ENCODE measurements at regions of chr16 and their contacts with region 1.

Region 1: GRCh38 chr16:4261557-4262172 is 11.2 kb downstream of the TFAP4 start:
- DNase-seq: peak in 1 of 2 experiments; percentile 95
- H3K4me3 ChIP-seq: no peak overlapping the region
- H3K27ac ChIP-seq: no peak overlapping the region
- H3K4me1 ChIP-seq: peaks cover 0 to 11% (median 8%) of the 10 kb centered on the region in 4 experiments; a peak in 5 of 7 replicates
- H3K27me3 ChIP-seq: no peaks in the 10 kb centered on the region
- CTCF ChIP-seq: peak; percentile 86 to 98 (median 97)
- EP300 ChIP-seq: no peak
- POLR2A ChIP-seq: no peak
- RAD21 ChIP-seq: peak; percentile 80 to 83

Region 2: DNA sequence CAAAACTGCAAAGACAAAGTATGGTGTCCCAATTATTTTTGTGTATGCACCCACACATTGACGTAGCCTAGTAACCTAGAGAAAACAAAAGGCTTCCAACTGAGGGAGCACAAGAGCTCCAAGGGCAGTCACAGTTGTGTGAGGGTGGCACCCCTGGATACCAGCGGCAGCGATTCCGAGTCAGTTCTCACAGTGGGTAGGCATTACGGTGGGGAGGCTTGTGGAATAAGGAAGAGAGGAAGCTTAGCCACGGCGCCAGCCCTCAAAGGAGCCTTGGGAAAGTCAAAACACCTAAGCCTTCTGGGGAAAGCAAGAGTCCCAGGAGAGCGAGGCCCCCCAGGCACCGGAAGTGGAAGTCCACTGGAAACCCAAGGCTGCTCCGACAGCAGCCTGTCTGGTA is 114.4 kb before region 1 on chr16:
- CTCF ChIA-PET with region 1: no interaction called
- POLR2A ChIA-PET with region 1: no interaction called
- DNase-seq: no peak
- H3K4me3 ChIP-seq: no peak overlapping the region
- H3K27ac ChIP-seq: no peak overlapping the region
- H3K4me1 ChIP-seq: no peaks in the 10 kb centered on the region; a peak in 1 of 7 replicates
- H3K27me3 ChIP-seq: no peaks in the 10 kb centered on the region
- CTCF ChIP-seq: no peak
- EP300 ChIP-seq: no peak
- POLR2A ChIP-seq: no peak
- RAD21 ChIP-seq: no peak

Region 3: GRCh38 chr16:4214215-4214621 is 47.4 kb before region 1 on chr16:
- CTCF ChIA-PET with region 1: no interaction called
- POLR2A ChIA-PET with region 1: no interaction called
- DNase-seq: peak in 1 of 2 experiments; percentile 17
- H3K4me3 ChIP-seq: no peak overlapping the region
- H3K27ac ChIP-seq: no peak overlapping the region
- H3K4me1 ChIP-seq: peaks cover 6 to 17% (median 8%) of the 10 kb centered on the region in 4 experiments
- H3K27me3 ChIP-seq: no peaks in the 10 kb centered on the region
- CTCF ChIP-seq: no peak
- EP300 ChIP-seq: no peak
- POLR2A ChIP-seq: no peak
- RAD21 ChIP-seq: no peak

Region 4: GRCh38 chr16:4293822-4294457 is 32.3 kb after region 1 on chr16:
- CTCF ChIA-PET with region 1: interaction called, 29 read pairs
- POLR2A ChIA-PET with region 1: interaction called, 403 read pairs
- DNase-seq: peak in 1 of 2 experiments; percentile 82
- H3K4me3 ChIP-seq: peak overlapping the region in 3 of 4 experiments; percentile 24 to 50 (median 34); a peak in 6 of 8 replicates
- H3K27ac ChIP-seq: peak overlapping the region; percentile 67
- H3K4me1 ChIP-seq: peaks cover 7 to 23% (median 15%) of the 10 kb centered on the region in 4 experiments
- H3K27me3 ChIP-seq: no peaks in the 10 kb centered on the region
- CTCF ChIP-seq: peak in 1 of 3 experiments; percentile 1; a peak in 1 of 4 replicates
- EP300 ChIP-seq: peak in 1 of 2 experiments; percentile 65; a peak in 1 of 3 replicates
- POLR2A ChIP-seq: peak in 1 of 2 experiments; percentile 26; a peak in 1 of 3 replicates
- RAD21 ChIP-seq: peak in 1 of 2 experiments; percentile 25; a peak in 1 of 4 replicates

Region 5: DNA sequence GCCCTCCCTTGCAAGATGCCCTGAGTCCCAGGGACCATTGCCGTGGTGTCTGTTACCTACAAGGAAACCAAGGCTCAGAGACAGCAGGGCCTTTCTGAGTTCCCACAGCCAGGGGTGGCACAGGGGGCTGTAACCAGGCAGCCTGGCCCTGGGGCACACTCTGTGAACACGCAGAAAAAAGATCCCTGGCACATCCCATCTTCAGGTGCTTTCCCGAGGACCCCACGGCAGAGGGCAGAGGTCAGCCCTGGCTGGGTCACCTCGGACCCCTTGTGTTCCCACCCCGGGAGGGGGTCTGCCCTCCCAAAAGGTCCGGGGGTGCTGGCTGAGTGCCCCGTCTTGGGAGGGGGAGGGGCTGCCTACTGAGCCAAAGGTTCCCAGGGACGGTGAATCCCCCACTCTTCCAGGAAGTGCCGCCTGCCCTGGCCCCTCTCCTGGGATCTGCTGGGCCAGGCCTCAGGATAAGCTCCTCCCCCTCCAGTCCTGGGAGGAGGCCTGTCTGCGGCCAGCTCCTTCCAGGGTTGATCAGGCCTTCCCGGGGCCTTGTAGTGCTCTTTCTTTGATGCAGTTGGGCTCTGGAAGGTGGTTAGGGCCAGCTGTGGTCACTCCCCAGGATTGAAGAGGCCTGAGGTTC is 62.3 kb after region 1 on chr16:
- CTCF ChIA-PET with region 1: interaction called, 132 read pairs
- POLR2A ChIA-PET with region 1: interaction called, 11 read pairs
- DNase-seq: peak in 1 of 2 experiments; percentile 77
- H3K4me3 ChIP-seq: peak overlapping the region in 1 of 4 experiments; percentile 11; a peak in 1 of 8 replicates
- H3K27ac ChIP-seq: no peak overlapping the region
- H3K4me1 ChIP-seq: peaks cover 5 to 38% (median 31%) of the 10 kb centered on the region in 4 experiments
- H3K27me3 ChIP-seq: no peaks in the 10 kb centered on the region
- CTCF ChIP-seq: no peak
- EP300 ChIP-seq: no peak
- POLR2A ChIP-seq: no peak
- RAD21 ChIP-seq: no peak

Region 6: DNA sequence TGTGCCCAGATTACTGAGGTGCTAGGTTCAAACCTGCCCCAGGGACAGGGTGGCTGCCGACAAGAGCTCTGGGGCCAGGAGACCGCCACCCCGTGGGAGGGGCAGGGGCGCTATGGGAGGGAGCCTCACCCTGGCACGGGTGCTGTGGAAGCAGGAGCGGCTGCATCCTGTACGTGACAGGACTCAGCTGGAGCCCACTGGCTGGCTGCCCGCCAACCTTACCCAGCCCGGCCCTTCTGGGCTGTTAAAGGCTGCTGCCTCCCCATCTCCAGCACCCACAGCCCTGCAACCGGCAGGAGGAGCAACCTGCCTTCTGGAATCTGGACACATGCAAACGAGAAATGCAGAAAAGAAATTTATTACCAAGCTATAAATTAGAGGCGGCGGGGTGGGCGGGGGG is 78.2 kb after region 1 on chr16:
- CTCF ChIA-PET with region 1: interaction called, 132 read pairs
- POLR2A ChIA-PET with region 1: interaction called, 4 read pairs
- DNase-seq: no peak
- H3K4me3 ChIP-seq: no peak overlapping the region
- H3K27ac ChIP-seq: no peak overlapping the region
- H3K4me1 ChIP-seq: no peaks in the 10 kb centered on the region; a peak in 2 of 7 replicates
- H3K27me3 ChIP-seq: no peaks in the 10 kb centered on the region
- CTCF ChIP-seq: no peak
- EP300 ChIP-seq: no peak
- POLR2A ChIP-seq: no peak
- RAD21 ChIP-seq: no peak